ENCODE measurements at regions of chr17 and their contacts with region 1.

Region 1: DNA sequence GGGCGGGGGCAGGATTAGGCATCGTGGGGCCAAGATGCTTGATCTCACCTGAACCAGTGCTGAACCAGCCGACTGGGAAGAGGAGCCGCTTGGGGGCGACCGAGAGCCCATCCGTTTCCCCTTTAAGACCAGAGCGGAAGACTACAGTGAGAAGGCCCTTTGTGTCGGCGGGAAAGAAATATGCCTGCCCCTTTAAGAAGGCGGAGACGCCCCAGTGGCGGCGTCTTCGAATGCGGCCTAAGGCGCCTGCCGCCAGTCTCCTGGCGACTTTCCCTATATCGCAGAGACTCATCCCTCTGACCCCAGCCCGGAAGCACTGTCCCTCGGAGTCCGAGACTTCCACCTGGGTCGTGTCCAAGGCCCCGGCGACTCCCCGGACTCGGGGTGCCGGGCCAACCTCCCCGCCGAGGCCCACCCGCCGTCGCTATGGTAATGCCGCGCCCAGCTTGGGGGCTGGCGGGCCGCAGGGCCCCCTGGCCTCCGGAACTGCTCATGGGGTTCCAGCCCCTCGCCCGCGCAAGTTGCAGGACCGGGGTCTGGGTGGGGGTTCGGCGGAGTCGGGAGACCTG is at the start of gene HROB:
- DNase-seq: peak; percentile 98 to 99
- H3K4me3 ChIP-seq: peak within 1 kb of the TSS; percentile 66
- H3K4me3 Mint-ChIP-seq: peak within 1 kb of the TSS; percentile 91
- H3K27ac Mint-ChIP-seq: peak within 1 kb of the TSS; percentile 95
- H3K4me1 ChIP-seq: peaks cover 18% of the 10 kb centered on the region
- H3K4me1 Mint-ChIP-seq: peaks cover 11% of the 10 kb centered on the region
- H3K27me3 ChIP-seq: no peaks in the 10 kb centered on the region
- H3K27me3 Mint-ChIP-seq: no peaks in the 10 kb centered on the region
- CTCF ChIP-seq: peak; percentile 95 to 97
- total RNA-seq, gene HROB: 15.2 and 17.0 TPM in 2 replicates

Region 2: GRCh38 chr17:44095642-44096496 is 45.9 kb before region 1 on chr17:
- CTCF ChIA-PET with region 1: interaction called, 7 read pairs
- POLR2A ChIA-PET with region 1: interaction called, 16 read pairs
- intact Hi-C with region 1: no loop called
- DNase-seq: peak; percentile 67 to 74
- H3K4me3 ChIP-seq: no peak overlapping the region
- H3K4me3 Mint-ChIP-seq: peak overlapping the region; percentile 7
- H3K27ac Mint-ChIP-seq: peak overlapping the region; percentile 69
- H3K4me1 ChIP-seq: peaks cover 9% of the 10 kb centered on the region; the same call in 1 of the 2 replicates
- H3K4me1 Mint-ChIP-seq: peaks cover 8% of the 10 kb centered on the region
- H3K27me3 ChIP-seq: no peaks in the 10 kb centered on the region
- H3K27me3 Mint-ChIP-seq: no peaks in the 10 kb centered on the region
- CTCF ChIP-seq: peak in 1 of 2 experiments; percentile 14

Region 3: GRCh38 chr17:44176257-44176656 is 34.5 kb after region 1 on chr17:
- CTCF ChIA-PET with region 1: no interaction called
- POLR2A ChIA-PET with region 1: no interaction called
- intact Hi-C with region 1: no loop called
- DNase-seq: no peak
- H3K4me3 ChIP-seq: no peak overlapping the region
- H3K4me3 Mint-ChIP-seq: no peak overlapping the region
- H3K27ac Mint-ChIP-seq: no peak overlapping the region
- H3K4me1 ChIP-seq: no peaks in the 10 kb centered on the region
- H3K4me1 Mint-ChIP-seq: no peaks in the 10 kb centered on the region
- H3K27me3 ChIP-seq: no peaks in the 10 kb centered on the region
- H3K27me3 Mint-ChIP-seq: no peaks in the 10 kb centered on the region
- CTCF ChIP-seq: no peak

Region 4: GRCh38 chr17:44186307-44187130 is 44.7 kb after region 1 on chr17 and contains the start of gene TMUB2:
- CTCF ChIA-PET with region 1: no interaction called
- POLR2A ChIA-PET with region 1: no interaction called
- intact Hi-C with region 1: loop called (anchors 1 kb)
- DNase-seq: peak; percentile 99 to 100
- H3K4me3 ChIP-seq: peak within 1 kb of the TSS; percentile 91
- H3K4me3 Mint-ChIP-seq: peak within 1 kb of the TSS; percentile 90
- H3K27ac Mint-ChIP-seq: peak within 1 kb of the TSS; percentile 91
- H3K4me1 ChIP-seq: peaks cover 10% of the 10 kb centered on the region; the same call in 1 of the 2 replicates
- H3K4me1 Mint-ChIP-seq: peaks cover 8% of the 10 kb centered on the region
- H3K27me3 ChIP-seq: no peaks in the 10 kb centered on the region
- H3K27me3 Mint-ChIP-seq: no peaks in the 10 kb centered on the region
- CTCF ChIP-seq: no peak
- total RNA-seq, gene TMUB2: 28.4 and 30.3 TPM in 2 replicates

Region 5: GRCh38 chr17:44331249-44331760 is 189.5 kb after region 1 on chr17:
- CTCF ChIA-PET with region 1: no interaction called
- POLR2A ChIA-PET with region 1: no interaction called
- intact Hi-C with region 1: no loop called
- DNase-seq: peak; percentile 81 to 89
- H3K4me3 ChIP-seq: no peak overlapping the region
- H3K4me3 Mint-ChIP-seq: no peak overlapping the region
- H3K27ac Mint-ChIP-seq: no peak overlapping the region
- H3K4me1 ChIP-seq: peaks cover 8% of the 10 kb centered on the region
- H3K4me1 Mint-ChIP-seq: no peaks in the 10 kb centered on the region
- H3K27me3 ChIP-seq: no peaks in the 10 kb centered on the region; the same call in 1 of the 2 replicates
- H3K27me3 Mint-ChIP-seq: no peaks in the 10 kb centered on the region
- CTCF ChIP-seq: peak; percentile 65 to 87